Left cardiac atrium (tissue), 4 donors: ENCODE measurements at regions of chr20 and their contacts with region 1.

Region 1: DNA sequence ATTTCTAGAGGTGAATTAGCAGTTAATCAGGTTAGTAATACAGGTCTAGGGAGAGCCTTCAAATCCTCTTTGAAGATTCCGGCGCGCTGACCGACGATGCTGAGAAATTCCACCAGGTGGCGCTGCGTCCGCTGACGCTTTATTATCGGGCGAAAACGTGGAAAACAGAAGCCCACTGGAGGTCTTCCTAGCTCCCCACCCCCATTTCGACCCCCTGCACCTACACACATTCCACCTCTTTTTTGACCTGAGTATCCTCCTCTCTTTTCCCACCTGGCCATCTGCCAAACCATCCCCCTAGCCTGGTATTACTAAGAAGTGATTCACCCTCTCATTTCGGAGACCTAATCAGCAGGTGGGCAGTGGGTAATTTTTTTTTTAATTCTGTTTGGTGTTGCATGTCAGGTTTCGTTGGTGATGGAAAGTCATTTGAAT is 65.4 kb upstream of the RIN2 start:
- DNase-seq: peak; percentile 53
- ATAC-seq: peak in 1 of 2 donors; percentile 25

Region 2: GRCh38 chr20:19742974-19743639 is 50.4 kb after region 1 on chr20:
- intact Hi-C with region 1: loop called (anchors 5 to 10 kb)
- DNase-seq: no peak
- ATAC-seq: no peak

Region 3: GRCh38 chr20:19757487-19758132 is 64.9 kb after region 1 on chr20:
- intact Hi-C with region 1: loop called in 1 of 2 experiments (anchors 2 kb)
- DNase-seq: peak; percentile 92
- ATAC-seq: peak; percentile 89 to 91

Region 4: GRCh38 chr20:19784511-19785172 is 91.9 kb after region 1 on chr20:
- intact Hi-C with region 1: loop called (anchors 1 to 10 kb)
- DNase-seq: peak; percentile 59
- ATAC-seq: peak; percentile 77 to 78

Region 5: GRCh38 chr20:19802492-19803158 is 109.9 kb after region 1 on chr20:
- intact Hi-C with region 1: loop called in 1 of 2 experiments (anchors 2 kb)
- DNase-seq: no peak
- ATAC-seq: peak; percentile 42 to 45

Region 6: DNA sequence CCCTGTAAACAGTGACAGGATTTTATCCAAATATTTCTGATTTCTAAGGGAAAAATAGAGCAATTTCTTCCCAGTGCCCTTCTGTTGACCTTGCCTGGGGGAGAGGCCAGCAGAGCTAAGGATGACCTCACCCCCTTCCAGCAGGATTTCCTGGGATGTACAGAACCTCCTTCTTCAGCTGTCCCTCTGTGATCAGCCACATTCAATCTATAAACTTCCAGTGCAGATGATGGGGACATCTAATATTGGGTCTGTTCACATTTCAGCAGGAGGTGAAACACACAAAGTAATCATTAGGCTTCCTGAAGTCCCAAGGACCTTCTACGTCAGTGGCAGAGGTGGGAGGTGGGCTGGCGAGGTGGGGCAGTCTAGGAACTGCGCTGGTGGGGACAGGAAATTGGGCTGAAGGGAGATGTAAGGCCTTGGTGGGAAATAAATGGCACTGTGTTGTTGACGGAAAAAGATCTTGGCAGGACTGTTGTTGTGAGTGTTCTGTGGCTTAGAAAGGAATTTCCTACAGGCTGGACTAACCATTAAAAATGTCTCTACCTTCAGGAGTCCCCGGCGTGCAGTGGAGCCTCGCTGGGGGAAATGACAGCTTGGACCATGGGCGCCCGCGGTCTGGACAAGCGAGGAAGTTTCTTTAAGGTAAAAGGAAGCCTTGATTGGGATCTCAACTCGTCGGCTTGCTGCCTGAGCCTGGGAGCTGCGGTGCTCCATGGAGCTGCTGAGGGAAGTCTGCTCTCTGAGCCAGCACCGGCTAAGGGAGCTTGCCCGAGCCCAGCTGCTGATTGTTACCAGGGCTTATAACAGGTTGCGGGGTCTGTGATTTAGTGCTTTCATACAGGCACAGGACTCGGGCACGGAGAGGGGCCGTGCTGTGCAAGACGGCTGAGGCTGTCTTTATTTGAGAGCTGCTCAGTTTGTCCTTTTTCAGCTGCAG is 196.6 kb after region 1 on chr20:
- intact Hi-C with region 1: loop called in 1 of 2 experiments (anchors 10 kb)
- DNase-seq: peak; percentile 73
- ATAC-seq: peak; percentile 68 to 75

Region 7: GRCh38 chr20:19995220-19995863 is 302.6 kb after region 1 on chr20:
- intact Hi-C with region 1: loop called (anchors 5 to 10 kb)
- DNase-seq: no peak
- ATAC-seq: peak; percentile 19 to 32